ENCODE measurements at regions of chr3 and their contacts with region 1.

Region 1: GRCh38 chr3:169739067-169739466 is 25.8 kb downstream of the TERC start:
- DNase-seq: no peak
- H3K4me3 Mint-ChIP-seq: no peak overlapping the region
- H3K27ac Mint-ChIP-seq: no peak overlapping the region
- H3K4me1 Mint-ChIP-seq: no peaks in the 10 kb centered on the region
- H3K27me3 Mint-ChIP-seq: peaks cover 10% of the 10 kb centered on the region
- CTCF ChIP-seq: no peak

Region 2: GRCh38 chr3:169694117-169694516 is 45.0 kb before region 1 on chr3:
- CTCF ChIA-PET with region 1: no interaction called
- intact Hi-C with region 1: loop called (anchors 5 kb)
- DNase-seq: no peak
- H3K4me3 Mint-ChIP-seq: no peak overlapping the region
- H3K27ac Mint-ChIP-seq: no peak overlapping the region
- H3K4me1 Mint-ChIP-seq: no peaks in the 10 kb centered on the region
- H3K27me3 Mint-ChIP-seq: peaks cover 15% of the 10 kb centered on the region
- CTCF ChIP-seq: no peak

Measured in Calu3 (cell line).